Right ventricle myocardium inferior (tissue), 1 donor: ENCODE measurements at regions of chr6 and their contacts with region 1.

Region 1: DNA sequence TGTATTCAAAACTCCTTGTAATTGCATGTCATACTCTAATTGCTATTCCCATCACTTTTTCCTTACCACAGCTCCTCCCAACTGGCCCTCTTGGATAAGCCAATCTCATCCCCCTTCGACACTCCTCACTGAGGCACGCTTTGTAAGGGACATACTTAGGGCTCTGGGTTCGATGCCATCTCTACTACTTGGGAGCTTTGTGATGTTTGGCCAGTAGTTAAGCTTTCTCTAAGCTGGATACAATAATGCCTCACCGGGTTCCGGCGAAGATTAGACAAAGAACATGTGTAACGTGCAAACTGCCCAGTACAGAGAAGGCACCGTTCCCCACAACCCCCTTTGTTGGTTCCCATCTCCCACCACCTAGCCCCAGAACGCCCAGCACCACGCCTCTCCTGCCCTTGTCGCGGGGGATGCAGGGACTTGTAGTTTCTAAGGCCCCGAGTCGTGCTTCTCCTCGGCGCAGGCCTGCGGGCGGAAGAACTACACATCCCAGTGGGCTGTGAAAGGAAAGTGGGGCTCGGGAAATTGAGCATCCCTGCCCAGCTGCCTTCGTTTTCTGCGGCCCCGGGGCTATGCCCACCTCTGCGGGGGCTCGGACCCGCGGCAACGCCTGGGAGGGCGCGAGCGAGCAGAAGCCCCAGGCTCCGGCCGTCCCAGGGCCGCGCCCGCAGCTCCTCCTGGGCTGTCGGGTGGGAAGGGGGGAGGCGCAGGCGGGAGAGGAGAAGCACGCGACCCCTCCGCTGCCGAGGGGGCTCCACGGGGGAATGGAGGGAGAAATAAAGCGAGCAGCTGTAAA is 1.1 kb upstream of the ZDHHC14 start:
- DNase-seq: peak; percentile 95
- ATAC-seq: peak; percentile 94

Region 2: DNA sequence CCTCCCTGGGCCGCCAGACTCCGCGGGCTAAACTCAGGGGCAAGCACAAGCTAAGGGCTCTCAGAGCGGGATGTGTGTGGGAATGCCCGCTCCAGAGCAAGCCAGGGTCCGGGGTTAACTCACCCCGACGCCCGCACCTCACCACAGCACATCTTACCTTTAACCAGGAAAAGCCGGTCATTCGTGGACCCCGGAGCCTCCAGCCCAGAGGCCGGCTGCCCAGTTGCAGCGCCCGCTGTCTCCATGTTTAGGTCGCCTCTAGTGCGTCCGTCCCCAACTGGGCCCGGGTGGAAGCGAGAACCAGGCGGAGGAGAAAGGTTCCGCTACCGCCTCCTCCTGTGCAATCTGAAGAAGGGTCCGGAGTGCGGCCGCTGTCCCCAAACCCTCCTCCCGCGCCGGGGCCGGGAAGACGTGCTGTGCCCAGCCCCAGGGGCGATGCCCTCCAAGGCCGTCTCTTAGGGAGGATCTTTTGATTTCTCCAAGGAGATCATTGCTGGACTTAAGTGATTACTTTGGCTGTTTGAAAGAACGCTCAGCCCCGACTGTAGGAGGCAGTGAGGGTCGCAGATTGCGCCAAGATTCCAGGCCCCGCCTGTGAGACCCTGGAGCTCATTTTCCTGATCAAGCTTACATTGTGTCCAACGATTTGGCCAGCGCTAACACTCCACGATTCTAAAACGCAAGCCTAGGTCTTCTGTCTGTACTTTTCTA is 56.4 kb before region 1 on chr6 and contains the start of gene TMEM242:
- intact Hi-C with region 1: loop called (anchors 2 kb)
- DNase-seq: peak; percentile 95
- ATAC-seq: peak; percentile 97
- total RNA-seq, gene TMEM242: 19.4 TPM

Region 3: GRCh38 chr6:157434349-157435033 is 54.6 kb after region 1 on chr6:
- intact Hi-C with region 1: loop called (anchors 5 kb)
- DNase-seq: no peak
- ATAC-seq: peak; percentile 85

Region 4: DNA sequence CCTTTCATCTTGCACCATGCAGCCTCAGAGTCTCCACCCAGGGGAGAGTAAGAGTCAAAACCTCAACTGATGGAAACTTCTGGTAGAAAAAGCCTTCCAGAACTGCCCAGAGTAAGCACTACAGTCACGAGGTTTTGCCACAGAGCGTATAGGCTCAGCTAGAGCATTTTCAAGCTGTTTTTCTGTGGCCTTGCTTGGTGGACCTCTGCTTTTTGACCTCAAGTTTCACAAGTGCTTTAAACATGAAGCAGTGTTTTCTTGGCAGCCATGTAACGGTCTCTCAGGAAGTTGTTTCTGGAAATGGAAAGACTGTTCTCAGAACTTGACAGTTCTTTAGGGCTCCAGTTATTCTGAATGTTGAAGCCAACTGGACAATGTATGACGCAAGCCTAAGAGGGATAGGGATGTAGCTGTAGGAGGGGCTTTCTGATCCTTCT is 147.6 kb after region 1 on chr6:
- intact Hi-C with region 1: loop called (anchors 10 kb)
- DNase-seq: no peak
- ATAC-seq: peak; percentile 92

Region 5: DNA sequence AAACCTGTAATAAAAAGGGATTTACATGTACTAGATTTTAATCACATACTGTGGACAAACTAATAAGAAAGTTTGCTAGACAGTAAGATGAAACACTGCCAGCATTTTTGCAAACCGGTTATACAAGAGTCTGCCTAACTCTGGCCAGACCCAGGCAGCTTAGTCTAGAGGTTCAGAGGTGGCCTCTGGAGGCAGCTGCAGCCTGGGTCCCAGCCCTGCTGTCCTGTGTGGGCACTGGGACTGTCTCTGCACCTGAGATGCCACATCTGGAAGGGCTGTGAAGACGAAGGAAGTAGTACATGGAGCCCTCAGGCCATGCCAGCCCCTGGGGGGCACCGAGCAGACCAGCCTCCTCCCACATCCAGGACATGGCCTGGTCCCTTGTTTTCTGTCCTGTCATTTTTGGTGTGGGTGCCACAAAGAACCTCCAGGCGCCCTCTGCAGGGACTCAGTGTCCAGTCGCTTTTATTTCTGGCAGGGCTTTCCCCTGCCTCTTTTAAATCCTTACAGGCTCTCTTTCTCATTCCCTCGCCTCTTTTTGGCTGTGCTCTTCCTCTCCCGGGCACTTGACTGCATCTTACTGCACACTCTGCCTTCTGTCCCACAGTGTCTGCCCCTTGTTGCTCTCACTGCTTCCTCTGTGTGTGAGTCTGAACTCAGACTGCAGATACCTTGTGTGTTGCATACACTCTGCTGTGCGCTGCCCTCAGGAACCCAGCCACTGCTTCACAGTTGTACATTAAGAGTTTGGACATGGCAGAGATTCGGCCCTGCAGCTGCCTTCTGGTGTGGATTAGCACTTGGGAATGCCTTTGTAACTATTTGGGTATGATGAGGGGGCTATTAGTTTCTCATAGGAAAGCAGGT is 217.8 kb after region 1 on chr6:
- intact Hi-C with region 1: loop called (anchors 5 kb)
- DNase-seq: no peak
- ATAC-seq: peak; percentile 59

Region 6: GRCh38 chr6:157667211-157668008 is 287.6 kb after region 1 on chr6:
- intact Hi-C with region 1: loop called (anchors 5 kb)
- DNase-seq: no peak
- ATAC-seq: no peak